GM12878 (cell line): ENCODE measurements at regions of chr1 and their contacts with region 1.

Region 1: GRCh38 chr1:66350001-66350547 is 183.9 kb upstream of the SGIP1 start:
- DNase-seq: no peak
- ATAC-seq: peak; percentile 64
- H3K4me3 ChIP-seq: peak overlapping the region; percentile 52; the same call in 1 of the 2 replicates
- H3K27ac ChIP-seq: peak overlapping the region; percentile 88
- H3K4me1 ChIP-seq: peaks cover 56% of the 10 kb centered on the region
- H3K27me3 ChIP-seq: no peaks in the 10 kb centered on the region
- CTCF ChIP-seq: no peak
- EP300 ChIP-seq: peak; percentile 98 to 99
- POLR2A ChIP-seq: 0 out of 2 replicates have a peak, but pooled peaks have one; percentile 31
- RAD21 ChIP-seq: no peak

Region 2: DNA sequence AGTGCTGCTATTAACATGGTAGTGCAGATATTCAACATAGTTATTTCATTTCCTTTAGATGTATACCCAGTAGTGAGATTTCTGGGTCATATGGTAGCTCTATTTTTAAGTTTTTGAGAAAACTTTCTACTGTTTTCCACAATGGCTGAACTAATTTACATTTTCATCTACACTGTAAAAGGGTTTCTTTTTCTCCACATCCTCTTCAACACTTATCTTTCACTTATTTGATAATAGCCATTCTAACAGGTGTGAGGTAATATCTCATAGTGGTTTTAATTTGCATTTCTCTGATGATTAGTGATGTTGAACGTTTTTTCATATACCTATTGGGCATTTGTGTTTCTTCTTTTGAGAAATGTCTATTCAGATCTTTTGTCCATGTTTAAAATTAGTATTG is 407.6 kb before region 1 on chr1:
- CTCF ChIA-PET with region 1: no interaction called
- POLR2A ChIA-PET with region 1: no interaction called
- RAD21 ChIA-PET with region 1: no interaction called
- SMC1A ChIA-PET with region 1: no interaction called
- in situ Hi-C with region 1: no loop called
- intact Hi-C with region 1: no loop called
- DNase-seq: no peak
- ATAC-seq: no peak
- H3K4me3 ChIP-seq: no peak overlapping the region
- H3K27ac ChIP-seq: no peak overlapping the region
- H3K4me1 ChIP-seq: no peaks in the 10 kb centered on the region
- H3K27me3 ChIP-seq: no peaks in the 10 kb centered on the region
- CTCF ChIP-seq: no peak
- EP300 ChIP-seq: no peak
- POLR2A ChIP-seq: no peak
- RAD21 ChIP-seq: no peak

Region 3: GRCh38 chr1:66331657-66332547 is 18.2 kb before region 1 on chr1:
- CTCF ChIA-PET with region 1: interaction called, 123 read pairs
- POLR2A ChIA-PET with region 1: interaction called, 79 read pairs
- RAD21 ChIA-PET with region 1: interaction called, 238 read pairs
- SMC1A ChIA-PET with region 1: interaction called, 331 read pairs
- in situ Hi-C with region 1: no loop called
- intact Hi-C with region 1: no loop called
- DNase-seq: no peak
- ATAC-seq: peak; percentile 13
- H3K4me3 ChIP-seq: peak overlapping the region; percentile 81
- H3K27ac ChIP-seq: peak overlapping the region; percentile 93
- H3K4me1 ChIP-seq: peaks cover 49% of the 10 kb centered on the region
- H3K27me3 ChIP-seq: no peaks in the 10 kb centered on the region
- CTCF ChIP-seq: no peak
- EP300 ChIP-seq: peak in 1 of 2 experiments; percentile 41; a peak in 1 of 4 replicates
- POLR2A ChIP-seq: peak; percentile 48; the same call in 1 of the 2 replicates
- RAD21 ChIP-seq: no peak

Region 4: GRCh38 chr1:66360285-66360724 is 10.2 kb after region 1 on chr1:
- CTCF ChIA-PET with region 1: interaction called, 72 read pairs
- POLR2A ChIA-PET with region 1: interaction called, 12 read pairs
- RAD21 ChIA-PET with region 1: interaction called, 34 read pairs
- SMC1A ChIA-PET with region 1: interaction called, 463 read pairs
- in situ Hi-C with region 1: no loop called
- intact Hi-C with region 1: loop called (anchors 2 kb)
- DNase-seq: no peak
- ATAC-seq: peak; percentile 51
- H3K4me3 ChIP-seq: no peak overlapping the region
- H3K27ac ChIP-seq: no peak overlapping the region
- H3K4me1 ChIP-seq: peaks cover 16% of the 10 kb centered on the region
- H3K27me3 ChIP-seq: no peaks in the 10 kb centered on the region
- CTCF ChIP-seq: peak; percentile 30 to 44 (median 37); a peak in 4 of 6 replicates
- EP300 ChIP-seq: no peak
- POLR2A ChIP-seq: no peak
- RAD21 ChIP-seq: peak; percentile 59

Region 5: GRCh38 chr1:66396212-66396890 is 46.3 kb after region 1 on chr1:
- CTCF ChIA-PET with region 1: interaction called, 5 read pairs
- POLR2A ChIA-PET with region 1: interaction called, 6 read pairs
- RAD21 ChIA-PET with region 1: interaction called, 14 read pairs
- SMC1A ChIA-PET with region 1: interaction called, 23 read pairs
- in situ Hi-C with region 1: no loop called
- intact Hi-C with region 1: loop called (anchors 2 kb)
- DNase-seq: peak; percentile 71
- ATAC-seq: peak; percentile 76
- H3K4me3 ChIP-seq: no peak overlapping the region
- H3K27ac ChIP-seq: peak overlapping the region; percentile 80
- H3K4me1 ChIP-seq: peaks cover 75% of the 10 kb centered on the region
- H3K27me3 ChIP-seq: no peaks in the 10 kb centered on the region
- CTCF ChIP-seq: no peak
- EP300 ChIP-seq: peak in 1 of 2 experiments; percentile 52; a peak in 2 of 4 replicates
- POLR2A ChIP-seq: no peak
- RAD21 ChIP-seq: no peak; the same call in 1 of the 2 replicates

Region 6: DNA sequence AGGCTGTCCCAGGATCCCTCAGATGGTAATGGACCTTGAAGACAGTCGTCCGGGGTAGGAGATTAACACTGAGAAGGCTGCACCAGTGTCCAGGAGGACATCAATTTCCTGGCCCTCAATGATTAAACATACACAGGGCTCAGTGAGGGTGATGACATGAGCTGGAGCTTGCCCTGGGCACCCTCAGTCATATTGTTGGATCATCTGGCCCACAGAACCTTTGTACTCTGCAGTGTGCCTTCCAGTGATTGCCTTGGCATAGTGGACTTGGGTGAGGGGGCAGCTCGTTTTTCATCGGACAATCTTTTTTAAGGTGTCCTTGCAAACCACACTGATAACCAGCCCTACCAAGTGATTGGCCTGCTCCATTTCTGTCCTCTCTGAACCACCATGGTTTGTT is 72.7 kb after region 1 on chr1:
- CTCF ChIA-PET with region 1: no interaction called
- POLR2A ChIA-PET with region 1: no interaction called
- RAD21 ChIA-PET with region 1: no interaction called
- SMC1A ChIA-PET with region 1: no interaction called
- in situ Hi-C with region 1: no loop called
- intact Hi-C with region 1: no loop called
- DNase-seq: no peak
- ATAC-seq: no peak
- H3K4me3 ChIP-seq: no peak overlapping the region
- H3K27ac ChIP-seq: no peak overlapping the region
- H3K4me1 ChIP-seq: no peaks in the 10 kb centered on the region; the same call in 1 of the 2 replicates
- H3K27me3 ChIP-seq: no peaks in the 10 kb centered on the region
- CTCF ChIP-seq: no peak
- EP300 ChIP-seq: no peak
- POLR2A ChIP-seq: no peak
- RAD21 ChIP-seq: no peak

Region 7: DNA sequence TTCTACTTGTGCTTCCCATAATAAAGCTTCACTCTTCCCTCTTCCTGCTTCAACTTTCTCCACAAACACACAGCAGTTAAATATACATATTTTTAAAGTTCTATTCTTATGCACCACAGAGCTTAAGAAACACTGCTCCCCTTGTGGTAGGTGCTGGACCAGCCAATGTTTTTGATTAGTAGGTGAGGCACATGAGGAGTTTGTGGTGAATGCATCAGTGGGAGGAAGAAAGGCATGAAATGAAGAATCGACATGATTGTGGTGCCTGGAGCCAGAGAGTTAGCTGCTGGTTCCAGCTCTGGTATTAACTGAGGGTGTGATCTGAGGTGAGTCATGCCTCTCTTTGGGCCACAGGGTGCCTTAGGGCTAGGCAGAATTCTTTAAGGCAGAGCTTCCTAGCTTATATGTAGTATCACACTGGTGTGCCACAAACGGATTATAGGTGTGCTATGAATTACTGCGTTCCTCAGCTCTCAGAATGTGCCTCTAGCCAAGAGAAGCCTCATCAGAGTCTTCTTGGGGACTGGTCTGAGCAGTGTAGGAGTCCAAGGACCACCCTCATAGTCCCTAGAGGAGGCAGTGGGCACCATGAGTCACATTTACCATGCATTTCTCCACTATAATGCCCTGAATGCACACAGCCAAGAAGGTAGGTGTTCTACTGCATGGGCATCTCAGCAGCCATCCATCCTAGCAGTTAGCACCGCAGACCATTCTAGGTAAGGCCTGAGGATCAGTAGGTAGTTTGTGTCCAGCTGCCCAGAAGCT is 86.5 kb after region 1 on chr1:
- CTCF ChIA-PET with region 1: interaction called, 150 read pairs
- POLR2A ChIA-PET with region 1: interaction called, 6 read pairs
- RAD21 ChIA-PET with region 1: interaction called, 15 read pairs
- SMC1A ChIA-PET with region 1: interaction called, 15 read pairs
- in situ Hi-C with region 1: no loop called
- intact Hi-C with region 1: no loop called
- DNase-seq: peak; percentile 44
- ATAC-seq: peak; percentile 85
- H3K4me3 ChIP-seq: no peak overlapping the region
- H3K27ac ChIP-seq: peak overlapping the region; percentile 7; the same call in 1 of the 2 replicates
- H3K4me1 ChIP-seq: peaks cover 31% of the 10 kb centered on the region
- H3K27me3 ChIP-seq: no peaks in the 10 kb centered on the region
- CTCF ChIP-seq: peak; percentile 27 to 56 (median 50); a peak in 5 of 6 replicates
- EP300 ChIP-seq: no peak
- POLR2A ChIP-seq: no peak
- RAD21 ChIP-seq: peak; percentile 58

Region 8: DNA sequence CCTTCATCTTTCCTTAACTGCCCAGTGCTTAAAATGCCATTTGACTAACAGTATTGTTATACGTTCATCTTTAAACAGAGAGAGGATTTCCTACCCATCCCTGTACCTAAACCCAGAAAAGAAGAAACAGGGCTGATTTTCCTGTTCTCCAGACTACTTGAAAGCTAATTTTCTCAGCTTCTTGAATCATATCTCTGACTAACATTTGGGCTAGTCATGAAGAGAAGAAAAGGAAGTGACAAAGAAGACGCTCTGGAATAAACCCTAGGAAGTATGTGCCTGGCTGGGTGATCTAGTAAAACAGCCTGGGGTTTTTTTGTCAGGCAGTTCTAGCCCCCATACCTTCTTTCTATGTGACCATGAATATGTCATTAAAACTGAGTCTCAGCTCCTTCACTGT is 139.1 kb after region 1 on chr1:
- CTCF ChIA-PET with region 1: no interaction called
- POLR2A ChIA-PET with region 1: no interaction called
- RAD21 ChIA-PET with region 1: no interaction called
- SMC1A ChIA-PET with region 1: no interaction called
- in situ Hi-C with region 1: no loop called
- intact Hi-C with region 1: no loop called
- DNase-seq: no peak
- ATAC-seq: no peak
- H3K4me3 ChIP-seq: no peak overlapping the region
- H3K27ac ChIP-seq: no peak overlapping the region
- H3K4me1 ChIP-seq: no peaks in the 10 kb centered on the region
- H3K27me3 ChIP-seq: no peaks in the 10 kb centered on the region
- CTCF ChIP-seq: no peak
- EP300 ChIP-seq: no peak
- POLR2A ChIP-seq: no peak
- RAD21 ChIP-seq: no peak